ENCODE measurements at regions of chr6 and their contacts with region 1.

Region 1: DNA sequence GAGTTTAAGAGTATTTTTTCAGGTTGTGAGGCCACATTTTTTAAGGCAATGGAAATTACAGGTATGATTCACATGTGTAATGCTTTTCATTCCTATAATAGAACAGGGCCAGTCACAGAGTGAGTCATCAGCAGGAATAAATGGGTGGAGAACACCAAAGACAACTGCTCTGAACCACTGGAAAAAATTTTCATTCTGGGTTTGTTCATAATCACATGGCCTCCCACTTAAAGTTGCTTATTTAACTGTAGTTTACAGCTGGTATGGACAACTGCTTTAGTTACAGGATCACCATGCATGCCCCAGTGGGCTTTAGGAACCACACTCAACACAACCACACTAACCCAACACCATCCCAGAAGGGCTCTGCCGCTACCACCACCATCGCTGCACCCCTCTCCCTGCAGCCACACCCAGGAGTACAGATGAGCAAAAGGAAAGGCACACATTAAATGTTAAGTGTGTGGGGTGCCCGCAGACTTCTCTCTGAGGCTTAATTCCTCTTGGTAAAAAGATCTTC is 107.0 kb upstream of the DST start:
- DNase-seq: no peak
- ATAC-seq: peak in 3 of 4 donors; percentile 31 to 53 (median 40)
- H3K4me3 ChIP-seq: no peak overlapping the region
- H3K27ac ChIP-seq: peak overlapping the region in 3 of 12 donors; percentile 7 to 34 (median 18)
- H3K4me1 ChIP-seq: peaks cover 0 to 67% (median 28%) of the 10 kb centered on the region in 12 donors
- H3K27me3 ChIP-seq: no peaks in the 10 kb centered on the region
- CTCF ChIP-seq: no peak
- POLR2A ChIP-seq: no peak

Region 2: GRCh38 chr6:56714982-56715456 is 34.7 kb before region 1 on chr6:
- intact Hi-C with region 1: loop called in 1 of 10 experiments (anchors 2 kb)
- DNase-seq: no peak
- ATAC-seq: peak in 3 of 4 donors; percentile 15 to 47 (median 25)
- H3K4me3 ChIP-seq: no peak overlapping the region
- H3K27ac ChIP-seq: peak overlapping the region in 11 of 12 donors; percentile 8 to 66 (median 56)
- H3K4me1 ChIP-seq: peaks cover 0 to 50% (median 35%) of the 10 kb centered on the region in 12 donors
- H3K27me3 ChIP-seq: no peaks in the 10 kb centered on the region
- CTCF ChIP-seq: no peak
- POLR2A ChIP-seq: no peak